ENCODE measurements at regions of chr5 and their contacts with region 1.

Region 1: GRCh38 chr5:139600336-139600949 is 39.3 kb downstream of the UBE2D2 start:
- DNase-seq: peak; percentile 30
- H3K4me3 ChIP-seq: no peak overlapping the region
- H3K27ac ChIP-seq: no peak overlapping the region
- H3K27me3 ChIP-seq: no peaks in the 10 kb centered on the region
- CTCF ChIP-seq: no peak

Region 2: DNA sequence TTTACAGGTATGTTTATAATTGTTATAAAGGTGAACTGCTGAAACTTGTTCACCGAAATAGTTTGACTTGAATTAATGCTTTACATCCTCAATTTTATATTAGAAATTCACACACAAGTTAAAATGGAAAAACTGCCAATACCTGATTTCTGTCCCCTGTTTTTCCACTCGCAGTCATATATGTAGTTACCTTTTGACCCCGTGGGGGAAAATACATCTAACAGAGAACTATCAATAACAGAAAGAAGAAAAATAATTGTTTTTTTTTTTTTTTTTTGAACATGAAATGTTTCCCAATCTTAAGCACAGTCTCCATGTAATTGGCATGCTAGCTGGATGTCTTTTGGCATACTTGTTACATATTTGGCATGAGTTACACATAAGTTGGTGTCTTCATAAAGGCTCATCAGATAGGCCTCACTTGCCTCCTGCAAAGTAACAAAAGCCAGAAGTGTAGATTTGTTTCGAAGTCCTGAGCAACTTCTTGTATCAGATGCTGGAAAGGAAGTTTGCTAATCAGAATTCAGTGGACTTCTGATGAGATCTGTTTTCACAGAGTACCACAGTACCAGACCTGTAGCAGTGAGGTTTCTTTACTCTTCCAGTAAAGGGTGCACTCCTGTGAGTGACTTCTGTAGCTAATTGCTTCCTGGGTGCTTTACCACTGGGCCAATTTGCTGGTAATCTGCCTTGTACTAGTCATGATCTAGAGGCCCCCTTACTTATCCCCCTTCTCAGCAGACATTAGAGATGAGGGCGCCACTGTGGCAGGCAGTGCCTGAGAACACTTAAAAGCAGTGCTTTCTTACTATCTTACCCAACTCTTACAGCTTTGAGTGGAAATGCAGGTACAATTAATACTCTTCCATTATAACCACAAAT is 11.5 kb after region 1 on chr5:
- CTCF ChIA-PET with region 1: interaction called, 12 read pairs
- POLR2A ChIA-PET with region 1: no interaction called
- DNase-seq: no peak
- H3K4me3 ChIP-seq: no peak overlapping the region
- H3K27ac ChIP-seq: no peak overlapping the region
- H3K27me3 ChIP-seq: no peaks in the 10 kb centered on the region
- CTCF ChIP-seq: no peak

Measured in AG04450 (cell line).